ENCODE measurements at regions of chr15 and their contacts with region 1.

Region 1: GRCh38 chr15:92881802-92882696 is 18.1 kb upstream of the CHD2 start:
- DNase-seq: peak; percentile 97 to 100 (median 99)

Region 2: GRCh38 chr15:92808978-92809879 is 72.8 kb before region 1 on chr15:
- intact Hi-C with region 1: loop called (anchors 1 kb)
- DNase-seq: peak; percentile 92 to 99 (median 96)

Region 3: DNA sequence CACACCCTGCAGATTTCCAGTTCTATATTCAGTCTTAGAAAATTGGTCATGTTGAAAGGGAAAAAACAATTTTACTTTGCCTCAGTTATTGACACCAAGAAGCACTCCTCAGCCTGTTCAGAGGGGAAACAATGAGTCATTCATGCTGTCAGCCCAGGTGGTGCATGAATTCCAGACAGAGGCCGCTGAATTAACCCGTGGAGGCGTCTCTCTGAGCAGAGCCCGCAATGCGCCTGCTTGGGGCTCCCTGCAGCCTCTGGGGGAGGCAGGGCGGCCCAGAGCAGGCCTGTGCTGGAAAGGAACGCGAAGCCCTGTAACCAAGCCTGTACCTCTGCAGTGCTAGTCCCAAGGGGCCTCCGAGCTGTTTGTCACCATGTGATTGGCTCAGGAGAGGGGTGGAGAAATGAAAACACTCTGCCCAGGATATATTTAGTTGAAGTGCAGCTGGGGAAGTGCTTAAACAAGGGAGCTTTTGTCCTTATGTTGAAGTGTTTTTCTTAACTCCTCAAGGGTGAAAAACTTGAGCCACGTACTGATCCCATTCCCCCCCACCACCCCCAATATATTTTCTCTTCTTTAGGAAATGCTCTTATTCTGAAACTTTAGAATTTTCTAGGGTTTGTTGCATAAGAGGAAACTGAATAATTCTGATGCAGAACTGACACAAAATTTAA is 50.3 kb before region 1 on chr15:
- intact Hi-C with region 1: loop called (anchors 2 kb)
- DNase-seq: peak; percentile 75 to 98 (median 90)

Region 4: DNA sequence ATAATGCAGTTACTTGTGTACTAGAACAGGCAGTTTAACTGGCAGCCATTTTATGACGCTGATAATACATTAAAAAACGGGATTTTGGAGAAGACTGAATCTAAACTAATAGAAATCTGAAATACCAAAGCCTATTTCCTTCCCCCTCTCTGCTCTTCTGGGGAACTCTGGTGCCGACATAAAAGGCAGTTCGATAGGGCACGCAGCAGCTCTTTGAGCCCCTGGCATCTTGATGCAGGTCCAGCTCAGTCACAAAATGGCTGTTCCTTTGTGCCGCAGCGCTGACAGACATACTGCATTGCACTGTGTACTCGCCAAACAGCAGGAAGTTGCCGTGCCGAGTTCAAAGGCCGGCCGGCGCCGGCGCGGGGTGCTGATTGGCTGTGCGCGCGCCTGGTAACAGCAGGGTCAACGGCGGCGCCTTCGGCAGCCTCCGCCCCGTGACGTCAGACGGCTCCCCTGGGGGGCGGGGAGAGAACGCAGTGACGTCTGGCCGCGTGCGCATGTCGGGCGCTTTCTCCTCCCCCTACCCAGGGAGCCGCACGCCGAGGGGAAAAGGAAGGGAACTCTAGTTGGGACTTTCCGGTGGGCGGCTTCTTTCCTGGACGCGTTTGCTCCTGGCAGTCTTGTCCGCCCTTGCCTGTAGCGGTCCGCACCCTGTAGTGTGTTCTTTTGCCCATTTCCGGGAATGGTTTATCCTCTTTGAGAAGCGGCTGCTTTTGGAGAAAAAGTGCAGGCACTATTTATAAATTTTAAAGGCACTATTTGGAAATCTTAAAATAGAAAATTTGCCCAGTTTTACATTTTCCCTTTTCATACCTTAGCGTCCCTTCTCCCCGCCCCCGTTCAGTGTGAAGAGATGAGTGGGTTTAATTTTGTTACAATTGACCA is 22.1 kb after region 1 on chr15:
- intact Hi-C with region 1: loop called (anchors 2 kb)
- DNase-seq: peak; percentile 98 to 100 (median 99)

Region 5: GRCh38 chr15:92917606-92918407 is 35.8 kb after region 1 on chr15:
- intact Hi-C with region 1: no loop called
- DNase-seq: peak; percentile 68 to 96 (median 88)

Measured in posterior cingulate gyrus (tissue), 11 donors.